ENCODE measurements at regions of chr9 and their contacts with region 1.

Region 1: GRCh38 chr9:85248508-85249312 is 493.0 kb downstream of the AGTPBP1 start:
- DNase-seq: no peak
- H3K4me3 ChIP-seq: no peak overlapping the region
- H3K27ac ChIP-seq: peak overlapping the region in 1 of 2 experiments; percentile 37; a peak in 2 of 4 replicates
- H3K4me1 ChIP-seq: peaks cover 0 to 6% of the 10 kb centered on the region in 2 experiments; a peak in 2 of 4 replicates
- H3K27me3 ChIP-seq: no peaks in the 10 kb centered on the region
- CTCF ChIP-seq: no peak
- EP300 ChIP-seq: peak in 1 of 2 experiments; percentile 40; a peak in 1 of 4 replicates
- RAD21 ChIP-seq: no peak

Region 2: DNA sequence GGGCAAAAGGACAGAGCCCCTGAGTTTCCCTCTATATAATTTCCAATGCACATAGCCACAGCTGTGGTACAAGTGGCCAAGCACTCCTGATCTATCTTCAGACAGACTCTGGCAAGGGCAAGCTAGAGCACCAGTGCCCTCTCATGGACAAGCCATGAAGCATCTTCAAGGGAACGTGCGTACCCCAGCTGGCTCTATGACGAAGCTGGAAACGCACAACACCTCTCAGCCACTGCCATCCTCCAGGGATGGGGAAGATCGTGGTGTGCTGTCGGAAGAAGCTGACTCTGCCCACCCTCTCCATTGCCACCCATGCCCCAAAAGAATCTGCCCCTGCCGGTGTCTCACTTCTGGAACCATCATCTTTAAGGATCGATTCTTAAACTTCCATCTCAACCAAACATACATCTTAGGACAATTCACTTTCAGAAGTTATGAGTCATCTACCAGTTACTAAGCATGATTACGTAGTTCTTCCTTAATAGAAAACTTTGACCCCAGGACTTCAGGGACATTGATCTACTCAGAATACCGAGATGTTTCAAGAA is 10.2 kb after region 1 on chr9:
- CTCF ChIA-PET with region 1: interaction called, 10 read pairs
- POLR2A ChIA-PET with region 1: no interaction called
- DNase-seq: peak; percentile 69
- H3K4me3 ChIP-seq: no peak overlapping the region; a peak in 1 of 4 replicates
- H3K27ac ChIP-seq: no peak overlapping the region
- H3K4me1 ChIP-seq: peaks cover 0 to 5% of the 10 kb centered on the region in 2 experiments; a peak in 2 of 4 replicates
- H3K27me3 ChIP-seq: no peaks in the 10 kb centered on the region
- CTCF ChIP-seq: peak; percentile 75
- EP300 ChIP-seq: no peak
- RAD21 ChIP-seq: peak; percentile 97

Measured in SK-N-SH (cell line).